PC-9 (cell line): ENCODE measurements at regions of chr13 and their contacts with region 1.

Region 1: GRCh38 chr13:110715395-110716235 is 2.1 kb downstream of the ING1 start:
- DNase-seq: peak; percentile 97 to 100
- H3K4me3 ChIP-seq: peak overlapping the region; percentile 95
- H3K27ac ChIP-seq: peak overlapping the region; percentile 48
- H3K4me1 ChIP-seq: peaks cover 28% of the 10 kb centered on the region
- H3K27me3 ChIP-seq: no peaks in the 10 kb centered on the region
- CTCF ChIP-seq: no peak

Region 2: DNA sequence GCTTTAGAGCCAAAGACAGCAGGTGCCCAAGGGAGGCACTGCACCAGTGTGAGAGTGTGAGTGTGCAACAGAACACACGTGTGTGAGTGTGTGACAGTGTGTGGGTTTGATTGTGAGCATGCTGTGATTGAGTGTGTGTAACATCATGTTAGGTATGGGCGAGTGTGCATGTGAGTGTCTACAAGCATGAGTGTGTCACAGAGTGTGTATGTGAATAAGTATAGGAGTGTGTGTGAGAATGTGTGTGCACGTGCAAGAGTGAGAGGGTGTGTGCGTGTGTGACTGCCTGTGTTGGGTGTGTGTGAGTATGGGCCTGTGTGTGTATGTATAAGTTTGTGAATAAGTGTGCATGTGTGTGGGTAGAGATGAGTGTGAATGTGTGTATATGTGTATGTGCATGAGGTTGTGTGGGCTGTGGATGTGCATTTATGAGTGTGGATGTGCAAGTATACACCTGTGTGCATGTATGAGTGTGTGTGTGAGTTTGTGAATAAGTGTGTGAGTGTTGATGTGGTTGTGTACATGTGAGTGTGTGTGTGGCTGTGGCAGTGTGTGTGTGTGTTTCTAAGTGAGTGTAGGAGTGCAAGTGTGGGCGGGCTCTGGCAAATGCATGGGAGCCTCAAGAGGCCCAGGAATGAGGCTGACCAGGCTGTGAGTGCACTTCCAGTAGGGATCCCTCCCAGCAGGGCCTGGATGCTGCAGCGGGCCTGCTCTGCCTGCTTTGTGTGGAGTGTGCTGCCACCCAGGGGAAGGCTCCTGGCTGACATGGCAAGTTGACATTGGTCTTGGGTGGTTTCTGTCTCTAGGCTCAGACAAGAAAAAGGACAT is 607.1 kb before region 1 on chr13:
- CTCF ChIA-PET with region 1: no interaction called
- POLR2A ChIA-PET with region 1: interaction called, 17 read pairs
- intact Hi-C with region 1: no loop called
- DNase-seq: peak; percentile 86 to 88
- H3K4me3 ChIP-seq: no peak overlapping the region
- H3K27ac ChIP-seq: peak overlapping the region; percentile 8; the same call in 1 of the 2 replicates
- H3K4me1 ChIP-seq: peaks cover 24% of the 10 kb centered on the region
- H3K27me3 ChIP-seq: no peaks in the 10 kb centered on the region
- CTCF ChIP-seq: peak; percentile 95

Region 3: DNA sequence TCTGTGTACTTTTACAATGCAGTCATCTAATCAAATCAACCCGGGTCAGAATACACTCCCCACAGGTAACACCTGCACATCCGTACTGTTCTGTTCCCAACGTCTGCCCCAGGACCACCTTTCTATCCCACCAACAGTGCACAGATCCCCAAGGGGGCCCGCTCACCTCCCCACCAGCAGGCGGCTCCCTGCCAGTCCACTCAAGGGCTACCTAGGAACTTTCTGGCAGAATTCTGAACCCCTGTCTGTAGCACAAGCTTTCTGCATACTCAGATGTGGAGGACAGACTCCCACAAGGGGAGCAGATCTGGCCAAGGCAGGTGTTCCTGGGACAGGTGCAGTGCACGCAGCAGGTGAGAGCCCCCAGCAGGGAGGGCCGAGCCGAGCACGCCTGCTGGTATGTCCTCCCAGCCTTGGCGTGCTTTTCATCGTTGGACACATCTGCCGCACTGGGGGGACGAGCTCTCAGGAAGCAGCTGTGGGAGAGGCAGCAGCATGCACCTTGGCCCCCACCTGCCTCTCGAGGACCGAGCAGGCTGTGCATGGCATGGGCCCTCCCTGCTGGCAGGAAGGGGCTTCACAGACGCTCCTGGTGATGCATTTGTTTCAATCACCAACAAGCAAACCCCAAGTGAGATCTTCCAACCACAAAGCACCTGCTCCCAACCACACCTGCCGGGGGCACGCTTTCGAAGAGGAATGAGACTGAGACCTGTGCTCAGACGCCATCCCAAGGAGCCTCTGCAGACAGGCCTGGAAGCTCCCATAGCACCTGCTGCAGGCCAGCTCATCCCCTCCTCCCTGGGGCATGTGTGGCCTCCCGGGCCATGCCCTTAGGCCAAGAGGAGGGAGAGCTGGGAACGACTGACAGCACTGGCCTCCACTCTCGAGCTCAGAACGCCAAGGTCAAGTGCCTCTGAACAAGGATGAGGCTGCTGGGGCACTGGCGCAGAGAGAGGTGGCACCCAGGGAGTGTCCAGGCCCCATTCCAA is 190.0 kb before region 1 on chr13:
- CTCF ChIA-PET with region 1: no interaction called
- POLR2A ChIA-PET with region 1: interaction called, 7 read pairs
- intact Hi-C with region 1: loop called (anchors 1 kb)
- DNase-seq: peak; percentile 72 to 90
- H3K4me3 ChIP-seq: no peak overlapping the region
- H3K27ac ChIP-seq: peak overlapping the region; percentile 71
- H3K4me1 ChIP-seq: peaks cover 79% of the 10 kb centered on the region
- H3K27me3 ChIP-seq: no peaks in the 10 kb centered on the region
- CTCF ChIP-seq: no peak

Region 4: DNA sequence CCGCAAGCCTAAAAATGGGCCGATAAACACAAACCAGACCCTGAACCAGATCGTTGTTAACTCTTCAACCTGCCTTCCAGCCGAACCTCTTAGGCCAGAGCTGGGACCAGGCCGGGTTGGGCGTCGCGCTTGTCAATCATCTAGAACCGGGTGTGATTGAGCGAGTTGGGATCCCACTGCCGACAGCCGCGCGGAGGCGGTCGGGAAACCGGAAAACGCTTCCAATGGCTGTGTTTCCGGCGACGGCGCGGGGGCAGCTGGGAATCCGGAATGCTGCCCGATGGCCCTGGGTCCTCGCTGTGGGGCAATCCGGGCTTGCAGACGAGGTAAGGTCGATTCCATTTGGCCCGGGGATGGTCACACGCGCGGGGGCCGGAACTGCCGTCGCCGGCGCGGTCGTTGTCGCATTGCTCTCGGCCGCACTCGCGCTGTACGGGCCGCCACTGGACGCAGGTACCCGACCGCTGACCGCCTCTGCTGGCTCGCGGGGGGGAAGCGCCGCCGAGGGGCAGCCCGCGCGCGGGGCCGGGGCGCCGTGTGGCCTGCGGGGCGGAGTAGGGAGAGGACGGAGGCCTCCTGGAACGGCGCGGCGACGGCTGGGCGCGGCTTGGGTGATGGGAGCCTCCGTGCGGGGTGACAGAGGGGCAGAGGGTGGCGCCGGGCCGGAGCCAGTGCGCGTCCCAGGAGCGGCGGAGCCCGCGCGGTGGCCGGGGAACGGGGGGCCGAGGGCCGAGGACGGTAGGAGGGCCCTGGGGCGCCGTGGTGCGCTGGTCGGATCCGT is 100.1 kb before region 1 on chr13 and contains the start of gene NAXD:
- CTCF ChIA-PET with region 1: interaction called, 4 read pairs
- POLR2A ChIA-PET with region 1: interaction called, 23 read pairs
- intact Hi-C with region 1: loop called (anchors 2 kb)
- DNase-seq: peak; percentile 88 to 89
- H3K4me3 ChIP-seq: peak within 1 kb of the TSS; percentile 90
- H3K27ac ChIP-seq: peak within 1 kb of the TSS; percentile 65
- H3K4me1 ChIP-seq: peaks cover 28% of the 10 kb centered on the region
- H3K27me3 ChIP-seq: no peaks in the 10 kb centered on the region
- CTCF ChIP-seq: peak; percentile 7; the same call in 1 of the 2 replicates
- total RNA-seq, gene NAXD: 30.2 and 35.2 TPM in 2 replicates

Region 5: GRCh38 chr13:110907951-110908898 is 192.6 kb after region 1 on chr13:
- CTCF ChIA-PET with region 1: no interaction called
- POLR2A ChIA-PET with region 1: no interaction called
- intact Hi-C with region 1: loop called (anchors 1 kb)
- DNase-seq: peak; percentile 82 to 100
- H3K4me3 ChIP-seq: no peak overlapping the region
- H3K27ac ChIP-seq: peak overlapping the region; percentile 91
- H3K4me1 ChIP-seq: peaks cover 51% of the 10 kb centered on the region
- H3K27me3 ChIP-seq: no peaks in the 10 kb centered on the region
- CTCF ChIP-seq: no peak; the same call in 1 of the 2 replicates

Region 6: GRCh38 chr13:111153279-111153976 is 437.8 kb after region 1 on chr13:
- CTCF ChIA-PET with region 1: no interaction called
- POLR2A ChIA-PET with region 1: no interaction called
- intact Hi-C with region 1: loop called (anchors 5 kb)
- DNase-seq: peak; percentile 83 to 87
- H3K4me3 ChIP-seq: peak overlapping the region; percentile 89
- H3K27ac ChIP-seq: peak overlapping the region; percentile 79
- H3K4me1 ChIP-seq: peaks cover 17% of the 10 kb centered on the region
- H3K27me3 ChIP-seq: peaks cover 22% of the 10 kb centered on the region
- CTCF ChIP-seq: no peak